CD8-positive, alpha-beta memory T cell (primary cell): ENCODE measurements at regions of chr11 and their contacts with region 1.

Region 1: DNA sequence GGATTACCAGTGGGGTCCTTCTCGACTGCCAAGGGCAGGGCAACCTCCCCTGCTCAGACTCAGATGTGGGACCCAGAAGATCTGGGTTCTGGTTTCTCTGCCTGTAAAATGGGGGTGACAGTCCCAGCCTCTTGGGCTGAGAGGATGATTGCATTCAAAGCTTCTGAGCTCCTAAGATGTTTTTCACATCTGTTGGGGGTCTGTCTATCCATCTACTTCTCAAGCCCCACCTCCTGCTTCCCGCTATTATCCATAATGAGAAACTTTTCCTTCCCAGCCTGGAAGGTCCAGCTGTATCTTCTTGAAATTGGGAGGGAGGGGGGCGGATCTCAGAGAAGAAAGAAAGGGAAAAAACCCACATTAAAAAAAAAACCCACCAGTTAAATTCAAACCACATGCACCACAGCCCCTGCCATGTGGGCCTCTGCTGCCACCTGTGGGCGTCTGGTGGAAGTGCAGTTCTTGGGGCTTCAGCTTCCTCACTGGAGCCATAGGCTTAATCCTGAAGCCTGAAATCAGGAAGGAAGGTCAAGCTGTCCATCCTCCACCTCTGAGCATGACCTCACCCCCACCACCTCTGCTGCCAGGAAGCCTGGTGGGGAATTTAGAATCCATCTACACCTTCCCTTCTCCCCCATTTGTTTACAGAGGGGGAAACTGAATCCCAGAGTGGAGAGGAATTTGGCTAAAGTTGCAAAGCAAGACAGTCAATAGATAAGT is 27.3 kb downstream of the ARHGEF17 start:
- DNase-seq: peak; percentile 62 to 83 (median 72)
- H3K4me3 ChIP-seq: no peak overlapping the region
- H3K4me3 Mint-ChIP-seq: no peak overlapping the region
- H3K27ac ChIP-seq: no peak overlapping the region
- H3K27ac Mint-ChIP-seq: no peak overlapping the region
- H3K4me1 ChIP-seq: no peaks in the 10 kb centered on the region
- H3K4me1 Mint-ChIP-seq: no peaks in the 10 kb centered on the region
- H3K27me3 ChIP-seq: no peaks in the 10 kb centered on the region
- H3K27me3 Mint-ChIP-seq: peaks cover 0 to 6% of the 10 kb centered on the region in 2 donors

Region 2: GRCh38 chr11:73242251-73243079 is 92.9 kb before region 1 on chr11:
- CTCF ChIA-PET with region 1: no interaction called
- POLR2A ChIA-PET with region 1: no interaction called
- DNase-seq: peak; percentile 47 to 71 (median 51)
- H3K4me3 ChIP-seq: no peak overlapping the region
- H3K4me3 Mint-ChIP-seq: peak overlapping the region in 2 of 7 donors; percentile 49 to 61
- H3K27ac ChIP-seq: no peak overlapping the region
- H3K27ac Mint-ChIP-seq: peak overlapping the region in 1 of 8 donors; percentile 52
- H3K4me1 ChIP-seq: peaks cover 4% of the 10 kb centered on the region
- H3K4me1 Mint-ChIP-seq: peaks cover 0 to 7% (median 1%) of the 10 kb centered on the region in 3 donors
- H3K27me3 ChIP-seq: no peaks in the 10 kb centered on the region
- H3K27me3 Mint-ChIP-seq: peaks cover 4 to 23% of the 10 kb centered on the region in 2 donors

Region 3: GRCh38 chr11:73307323-73308002 is 27.9 kb before region 1 on chr11:
- CTCF ChIA-PET with region 1: interaction called, 109 read pairs
- POLR2A ChIA-PET with region 1: interaction called, 7 read pairs
- DNase-seq: peak; percentile 79 to 91 (median 82)
- H3K4me3 ChIP-seq: peak overlapping the region; percentile 67
- H3K4me3 Mint-ChIP-seq: peak overlapping the region; percentile 86 to 96 (median 89)
- H3K27ac ChIP-seq: peak overlapping the region; percentile 25
- H3K27ac Mint-ChIP-seq: peak overlapping the region in 6 of 8 donors; percentile 4 to 95 (median 30)
- H3K4me1 ChIP-seq: peaks cover 7% of the 10 kb centered on the region
- H3K4me1 Mint-ChIP-seq: peaks cover 9 to 10% (median 10%) of the 10 kb centered on the region in 3 donors
- H3K27me3 ChIP-seq: peaks cover 5% of the 10 kb centered on the region
- H3K27me3 Mint-ChIP-seq: peaks cover 16 to 33% of the 10 kb centered on the region in 2 donors

Region 4: GRCh38 chr11:73810637-73811036 is 475.3 kb after region 1 on chr11:
- CTCF ChIA-PET with region 1: no interaction called
- POLR2A ChIA-PET with region 1: no interaction called
- DNase-seq: no peak
- H3K4me3 ChIP-seq: no peak overlapping the region
- H3K4me3 Mint-ChIP-seq: no peak overlapping the region
- H3K27ac ChIP-seq: no peak overlapping the region
- H3K27ac Mint-ChIP-seq: no peak overlapping the region
- H3K4me1 ChIP-seq: no peaks in the 10 kb centered on the region
- H3K4me1 Mint-ChIP-seq: peaks cover 5 to 6% (median 5%) of the 10 kb centered on the region in 3 donors
- H3K27me3 ChIP-seq: no peaks in the 10 kb centered on the region
- H3K27me3 Mint-ChIP-seq: no peaks in the 10 kb centered on the region